Activated B cell treated with CpG ODN at 0.5 μM for 24 hours (primary cell): ENCODE measurements at regions of chr3 and their contacts with region 1.

Region 1: DNA sequence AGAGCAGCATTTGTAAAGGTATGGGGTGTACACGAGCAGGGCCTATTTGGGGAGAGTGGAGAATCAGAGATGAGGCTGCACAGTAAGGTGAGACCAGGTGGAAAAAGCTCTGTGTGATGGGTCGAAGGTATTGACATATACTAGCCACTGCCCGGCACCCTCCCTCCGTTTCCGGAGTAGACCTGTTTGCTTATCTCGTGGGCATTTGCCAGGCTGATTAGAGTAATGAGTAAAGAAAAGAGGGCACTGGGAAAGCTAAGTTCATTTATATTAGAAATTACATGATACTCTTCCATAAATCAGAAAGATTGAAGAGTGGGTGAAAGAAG is 46.2 kb upstream of the ATG7 start:
- DNase-seq: no peak
- ATAC-seq: no peak
- H3K4me3 Mint-ChIP-seq: no peak overlapping the region
- H3K27ac Mint-ChIP-seq: no peak overlapping the region
- H3K4me1 Mint-ChIP-seq: peaks cover 22% of the 10 kb centered on the region
- H3K27me3 Mint-ChIP-seq: peaks cover 4% of the 10 kb centered on the region
- CTCF ChIP-seq: no peak

Region 2: DNA sequence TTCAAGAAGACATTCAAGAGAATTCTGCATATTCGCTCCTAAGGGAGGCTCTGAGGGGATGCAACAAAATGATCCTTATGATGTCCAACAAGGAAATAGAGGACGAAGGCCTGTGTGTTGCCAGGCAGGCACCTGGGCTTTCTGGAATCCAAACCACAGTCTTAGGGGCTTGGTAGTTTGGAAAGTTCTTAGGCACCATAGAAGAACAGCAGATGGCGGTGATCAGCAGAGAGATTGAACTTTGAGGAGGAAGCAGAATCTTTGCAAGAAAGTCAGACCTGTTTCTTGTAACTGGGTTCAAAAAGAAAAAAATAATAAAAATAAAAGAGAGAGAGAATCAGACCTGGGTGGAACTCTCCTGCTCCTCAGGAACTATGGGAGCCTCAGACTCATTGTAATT is 34.5 kb after region 1 on chr3:
- CTCF ChIA-PET with region 1: no interaction called
- POLR2A ChIA-PET with region 1: no interaction called
- intact Hi-C with region 1: no loop called
- DNase-seq: no peak
- ATAC-seq: no peak
- H3K4me3 Mint-ChIP-seq: no peak overlapping the region
- H3K27ac Mint-ChIP-seq: no peak overlapping the region
- H3K4me1 Mint-ChIP-seq: no peaks in the 10 kb centered on the region
- H3K27me3 Mint-ChIP-seq: peaks cover 18% of the 10 kb centered on the region
- CTCF ChIP-seq: no peak

Region 3: GRCh38 chr3:11739706-11740105 is 513.7 kb after region 1 on chr3:
- CTCF ChIA-PET with region 1: no interaction called
- POLR2A ChIA-PET with region 1: no interaction called
- intact Hi-C with region 1: no loop called
- DNase-seq: no peak
- ATAC-seq: no peak
- H3K4me3 Mint-ChIP-seq: no peak overlapping the region
- H3K27ac Mint-ChIP-seq: no peak overlapping the region
- H3K4me1 Mint-ChIP-seq: no peaks in the 10 kb centered on the region
- H3K27me3 Mint-ChIP-seq: no peaks in the 10 kb centered on the region
- CTCF ChIP-seq: no peak

Region 4: GRCh38 chr3:11846281-11847034 is 620.5 kb after region 1 on chr3 and contains the start of gene TAMM41:
- CTCF ChIA-PET with region 1: no interaction called
- POLR2A ChIA-PET with region 1: no interaction called
- intact Hi-C with region 1: loop called (anchors 5 kb)
- DNase-seq: peak; percentile 77
- ATAC-seq: peak; percentile 100
- H3K4me3 Mint-ChIP-seq: peak within 1 kb of the TSS; percentile 99
- H3K27ac Mint-ChIP-seq: peak within 1 kb of the TSS; percentile 95
- H3K4me1 Mint-ChIP-seq: peaks cover 37% of the 10 kb centered on the region
- H3K27me3 Mint-ChIP-seq: no peaks in the 10 kb centered on the region
- CTCF ChIP-seq: no peak
- total RNA-seq, gene TAMM41: 28.1 and 39.0 TPM in 2 replicates